PC-3 (cell line): ENCODE measurements at regions of chr3 and their contacts with region 1.

Region 1: GRCh38 chr3:141875374-141875892 is 1.0 kb upstream of the ATP1B3 start:
- DNase-seq: peak; percentile 76
- ATAC-seq: peak; percentile 73
- H3K4me3 ChIP-seq: peak overlapping the region; percentile 80
- H3K27ac ChIP-seq: peak overlapping the region; percentile 60; the same call in 1 of the 2 replicates
- H3K4me1 ChIP-seq: 0 out of 2 replicates have a peak, but pooled peaks cover 7% of the 10 kb centered on the region
- H3K27me3 ChIP-seq: no peaks in the 10 kb centered on the region
- CTCF ChIP-seq: peak; percentile 77

Region 2: GRCh38 chr3:141231101-141231935 is 644.1 kb before region 1 on chr3 and contains the start of gene PXYLP1:
- CTCF ChIA-PET with region 1: interaction called, 18 read pairs
- POLR2A ChIA-PET with region 1: no interaction called
- intact Hi-C with region 1: no loop called
- DNase-seq: peak; percentile 84
- ATAC-seq: peak; percentile 92
- H3K4me3 ChIP-seq: peak within 1 kb of the TSS; percentile 64
- H3K27ac ChIP-seq: no peak within 1 kb of the TSS
- H3K4me1 ChIP-seq: peaks cover 11% of the 10 kb centered on the region; the same call in 1 of the 2 replicates
- H3K27me3 ChIP-seq: no peaks in the 10 kb centered on the region
- CTCF ChIP-seq: peak; percentile 38; the same call in 1 of the 2 replicates
- total RNA-seq, gene PXYLP1: 6.2 and 16.6 TPM in 2 replicates

Region 3: DNA sequence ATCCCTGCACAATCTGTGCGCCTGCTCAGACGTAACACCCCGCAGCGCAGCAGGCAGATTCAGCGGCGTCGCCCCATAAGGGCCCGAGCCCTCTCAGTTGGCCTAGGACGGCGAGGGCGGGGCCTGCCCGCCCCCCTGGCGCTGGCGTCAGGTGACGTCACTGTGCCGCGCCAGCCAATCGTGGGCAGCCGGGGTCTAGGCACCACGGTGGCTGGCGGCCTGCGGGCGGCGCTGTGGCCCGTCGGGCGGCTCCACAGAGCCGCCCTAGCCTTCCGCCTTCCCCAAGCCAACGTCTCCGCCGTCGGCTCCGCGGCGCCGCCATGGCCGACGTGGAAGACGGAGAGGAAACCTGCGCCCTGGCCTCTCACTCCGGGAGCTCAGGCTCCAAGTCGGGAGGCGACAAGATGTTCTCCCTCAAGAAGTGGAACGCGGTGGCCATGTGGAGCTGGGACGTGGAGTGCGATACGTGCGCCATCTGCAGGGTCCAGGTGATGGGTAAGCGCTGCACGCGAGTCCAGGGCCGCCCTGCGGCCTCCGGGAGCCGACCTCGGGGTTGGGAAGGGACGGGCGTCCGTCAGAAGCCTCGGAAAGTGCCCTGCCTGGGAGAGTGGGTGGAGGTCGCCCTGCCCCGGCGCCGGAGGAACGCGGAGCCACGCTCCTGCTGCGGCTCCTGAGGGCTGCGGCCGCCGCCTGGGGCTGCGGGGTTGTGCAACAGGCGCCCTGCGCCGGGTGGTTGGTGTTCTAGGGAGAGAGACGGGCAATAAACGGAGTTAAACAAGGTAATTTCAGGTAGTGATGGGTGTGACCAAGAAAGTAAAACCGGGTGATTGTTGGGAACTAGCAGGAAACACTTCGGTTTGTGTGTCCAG is 137.2 kb before region 1 on chr3 and contains the start of gene RNF7:
- CTCF ChIA-PET with region 1: interaction called, 3 read pairs
- POLR2A ChIA-PET with region 1: no interaction called
- intact Hi-C with region 1: loop called (anchors 1 kb)
- DNase-seq: peak; percentile 95
- ATAC-seq: peak; percentile 95
- H3K4me3 ChIP-seq: peak within 1 kb of the TSS; percentile 95
- H3K27ac ChIP-seq: peak within 1 kb of the TSS; percentile 74
- H3K4me1 ChIP-seq: peaks cover 19% of the 10 kb centered on the region
- H3K27me3 ChIP-seq: no peaks in the 10 kb centered on the region
- CTCF ChIP-seq: peak; percentile 71
- total RNA-seq, gene RNF7: 42.3 and 42.9 TPM in 2 replicates

Region 4: DNA sequence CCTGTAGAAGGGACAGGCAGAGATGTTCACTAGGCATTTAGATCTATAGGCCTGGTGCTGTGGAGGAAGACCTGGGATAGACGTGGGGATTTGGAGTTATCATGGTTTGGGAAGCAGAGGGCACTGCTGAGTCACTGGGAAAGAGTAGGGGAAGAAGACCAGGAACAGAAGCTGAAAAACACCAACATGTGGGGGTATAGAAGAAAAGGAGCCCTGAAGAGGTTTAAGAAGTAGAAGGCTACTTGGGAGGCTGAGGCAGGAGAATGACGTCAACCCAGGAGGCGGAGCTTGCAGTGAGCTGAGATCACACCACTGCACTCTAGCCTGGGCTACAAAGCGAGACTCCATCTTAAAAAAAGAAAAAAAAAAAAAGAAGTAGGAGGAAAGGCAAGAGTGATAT is 93.0 kb before region 1 on chr3:
- CTCF ChIA-PET with region 1: interaction called, 3 read pairs
- POLR2A ChIA-PET with region 1: no interaction called
- intact Hi-C with region 1: loop called (anchors 1 kb)
- DNase-seq: peak; percentile 34
- ATAC-seq: peak; percentile 63
- H3K4me3 ChIP-seq: no peak overlapping the region
- H3K27ac ChIP-seq: no peak overlapping the region
- H3K4me1 ChIP-seq: no peaks in the 10 kb centered on the region
- H3K27me3 ChIP-seq: no peaks in the 10 kb centered on the region
- CTCF ChIP-seq: peak; percentile 37

Region 5: GRCh38 chr3:141840737-141841544 is 34.5 kb before region 1 on chr3:
- CTCF ChIA-PET with region 1: no interaction called
- POLR2A ChIA-PET with region 1: no interaction called
- intact Hi-C with region 1: loop called (anchors 2 kb)
- DNase-seq: peak; percentile 58
- ATAC-seq: peak; percentile 81
- H3K4me3 ChIP-seq: peak overlapping the region; percentile 13; the same call in 1 of the 2 replicates
- H3K27ac ChIP-seq: peak overlapping the region; percentile 87
- H3K4me1 ChIP-seq: peaks cover 17% of the 10 kb centered on the region
- H3K27me3 ChIP-seq: no peaks in the 10 kb centered on the region
- CTCF ChIP-seq: no peak

Region 6: GRCh38 chr3:141851411-141851810 is 24.0 kb before region 1 on chr3:
- CTCF ChIA-PET with region 1: no interaction called
- POLR2A ChIA-PET with region 1: interaction called, 18 read pairs
- intact Hi-C with region 1: no loop called
- DNase-seq: peak; percentile 60
- ATAC-seq: peak; percentile 78
- H3K4me3 ChIP-seq: no peak overlapping the region
- H3K27ac ChIP-seq: no peak overlapping the region
- H3K4me1 ChIP-seq: no peaks in the 10 kb centered on the region; the same call in 1 of the 2 replicates
- H3K27me3 ChIP-seq: no peaks in the 10 kb centered on the region
- CTCF ChIP-seq: no peak

Region 7: DNA sequence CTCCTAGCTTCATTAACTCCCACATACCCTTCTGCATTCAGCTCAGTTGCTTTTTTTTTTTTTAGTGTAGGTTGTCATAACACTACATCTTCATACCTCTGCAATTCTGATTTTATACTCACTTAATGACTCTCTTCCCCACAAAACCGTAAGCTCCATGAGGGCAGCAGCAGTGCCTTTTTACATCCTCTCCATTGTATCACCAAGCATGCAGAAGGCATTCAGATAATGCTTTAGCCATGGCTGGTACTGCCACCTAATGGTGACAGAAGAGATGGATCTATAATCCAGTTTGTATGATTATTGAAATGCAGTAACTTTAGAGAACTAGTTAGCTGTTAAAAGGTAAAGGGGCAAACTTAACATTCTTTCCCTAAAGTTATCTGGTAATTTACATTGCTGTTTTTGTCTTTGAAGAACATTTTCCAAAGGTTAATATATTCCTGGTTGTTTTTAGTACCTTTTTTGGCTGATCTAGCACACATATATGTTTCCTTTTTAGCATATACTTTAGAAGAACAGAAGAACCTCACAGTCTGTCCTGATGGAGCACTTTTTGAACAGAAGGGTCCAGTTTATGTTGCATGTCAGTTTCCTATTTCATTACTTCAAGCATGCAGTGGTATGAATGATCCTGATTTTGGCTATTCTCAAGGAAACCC is 37.8 kb after region 1 on chr3:
- CTCF ChIA-PET with region 1: interaction called, 7 read pairs
- POLR2A ChIA-PET with region 1: no interaction called
- intact Hi-C with region 1: loop called (anchors 5 kb)
- DNase-seq: peak; percentile 71
- ATAC-seq: peak; percentile 70
- H3K4me3 ChIP-seq: no peak overlapping the region
- H3K27ac ChIP-seq: no peak overlapping the region
- H3K4me1 ChIP-seq: no peaks in the 10 kb centered on the region
- H3K27me3 ChIP-seq: no peaks in the 10 kb centered on the region
- CTCF ChIP-seq: peak; percentile 75